MCF 10A (cell line): ENCODE measurements at regions of chr5 and their contacts with region 1.

Region 1: GRCh38 chr5:137778772-137779564 is 24.8 kb upstream of the HNRNPA0 start:
- DNase-seq: peak; percentile 82
- H3K4me3 Mint-ChIP-seq: no peak overlapping the region
- H3K27ac Mint-ChIP-seq: no peak overlapping the region
- H3K4me1 Mint-ChIP-seq: no peaks in the 10 kb centered on the region
- H3K27me3 Mint-ChIP-seq: peaks cover 24% of the 10 kb centered on the region
- CTCF ChIP-seq: peak; percentile 86

Region 2: GRCh38 chr5:137754126-137754960 is 24.6 kb before region 1 on chr5 and contains the start of gene HNRNPA0:
- CTCF ChIA-PET with region 1: interaction called, 35 read pairs
- POLR2A ChIA-PET with region 1: interaction called, 8 read pairs
- intact Hi-C with region 1: no loop called
- DNase-seq: peak; percentile 98
- H3K4me3 Mint-ChIP-seq: peak within 1 kb of the TSS; percentile 87
- H3K27ac Mint-ChIP-seq: peak within 1 kb of the TSS; percentile 99
- H3K4me1 Mint-ChIP-seq: peaks cover 28% of the 10 kb centered on the region
- H3K27me3 Mint-ChIP-seq: no peaks in the 10 kb centered on the region
- CTCF ChIP-seq: no peak
- total RNA-seq, gene HNRNPA0: 30.8 and 31.8 TPM in 2 replicates

Region 3: DNA sequence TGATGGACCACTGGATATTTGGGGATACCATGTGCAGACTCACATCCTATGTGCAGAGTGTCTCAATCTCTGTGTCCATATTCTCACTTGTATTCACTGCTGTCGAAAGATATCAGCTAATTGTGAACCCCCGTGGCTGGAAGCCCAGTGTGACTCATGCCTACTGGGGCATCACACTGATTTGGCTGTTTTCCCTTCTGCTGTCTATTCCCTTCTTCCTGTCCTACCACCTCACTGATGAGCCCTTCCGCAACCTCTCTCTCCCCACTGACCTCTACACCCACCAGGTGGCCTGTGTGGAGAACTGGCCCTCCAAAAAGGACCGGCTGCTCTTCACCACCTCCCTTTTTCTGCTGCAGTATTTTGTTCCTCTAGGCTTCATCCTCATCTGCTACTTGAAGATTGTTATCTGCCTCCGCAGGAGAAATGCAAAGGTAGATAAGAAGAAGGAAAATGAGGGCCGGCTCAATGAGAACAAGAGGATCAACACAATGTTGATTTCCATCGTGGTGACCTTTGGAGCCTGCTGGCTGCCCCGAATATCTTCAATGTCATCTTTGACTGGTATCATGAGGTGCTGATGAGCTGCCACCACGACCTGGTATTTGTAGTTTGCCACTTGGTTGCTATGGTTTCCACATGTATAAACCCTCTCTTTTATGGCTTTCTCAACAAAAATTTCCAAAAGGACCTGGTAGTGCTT is 29.7 kb after region 1 on chr5:
- CTCF ChIA-PET with region 1: interaction called, 15 read pairs
- POLR2A ChIA-PET with region 1: no interaction called
- intact Hi-C with region 1: no loop called
- DNase-seq: peak; percentile 65
- H3K4me3 Mint-ChIP-seq: no peak overlapping the region
- H3K27ac Mint-ChIP-seq: no peak overlapping the region
- H3K4me1 Mint-ChIP-seq: no peaks in the 10 kb centered on the region
- H3K27me3 Mint-ChIP-seq: peaks cover 17% of the 10 kb centered on the region
- CTCF ChIP-seq: no peak

Region 4: GRCh38 chr5:137954131-137954879 is 175.3 kb after region 1 on chr5:
- CTCF ChIA-PET with region 1: interaction called, 36 read pairs
- POLR2A ChIA-PET with region 1: interaction called, 3 read pairs
- intact Hi-C with region 1: no loop called
- DNase-seq: peak; percentile 85
- H3K4me3 Mint-ChIP-seq: peak overlapping the region; percentile 25
- H3K27ac Mint-ChIP-seq: peak overlapping the region; percentile 70
- H3K4me1 Mint-ChIP-seq: peaks cover 10% of the 10 kb centered on the region
- H3K27me3 Mint-ChIP-seq: no peaks in the 10 kb centered on the region
- CTCF ChIP-seq: no peak

Region 5: DNA sequence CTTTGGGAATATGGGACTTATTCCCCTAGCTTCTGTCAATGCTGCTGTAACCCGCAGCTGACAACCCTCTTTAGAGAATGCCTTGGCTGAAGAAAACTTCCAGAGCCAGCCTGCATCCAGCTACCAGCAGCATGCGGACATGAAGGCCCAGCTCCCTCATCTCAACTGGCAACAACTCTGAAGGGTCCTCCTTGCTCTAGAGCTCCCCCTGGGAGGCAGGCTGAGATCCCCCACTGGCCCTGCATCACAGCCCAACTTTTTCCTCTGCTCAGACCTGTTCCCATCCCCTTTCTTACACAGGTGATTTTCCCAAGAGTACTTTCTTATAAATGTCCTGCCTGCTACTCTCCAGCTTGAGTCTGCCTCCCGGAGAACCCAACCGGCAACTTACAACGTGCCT is 286.1 kb after region 1 on chr5:
- CTCF ChIA-PET with region 1: interaction called, 29 read pairs
- POLR2A ChIA-PET with region 1: interaction called, 4 read pairs
- intact Hi-C with region 1: loop called (anchors 1 kb)
- DNase-seq: no peak
- H3K4me3 Mint-ChIP-seq: no peak overlapping the region
- H3K27ac Mint-ChIP-seq: no peak overlapping the region
- H3K4me1 Mint-ChIP-seq: peaks cover 7% of the 10 kb centered on the region
- H3K27me3 Mint-ChIP-seq: no peaks in the 10 kb centered on the region
- CTCF ChIP-seq: peak; percentile 18

Region 6: DNA sequence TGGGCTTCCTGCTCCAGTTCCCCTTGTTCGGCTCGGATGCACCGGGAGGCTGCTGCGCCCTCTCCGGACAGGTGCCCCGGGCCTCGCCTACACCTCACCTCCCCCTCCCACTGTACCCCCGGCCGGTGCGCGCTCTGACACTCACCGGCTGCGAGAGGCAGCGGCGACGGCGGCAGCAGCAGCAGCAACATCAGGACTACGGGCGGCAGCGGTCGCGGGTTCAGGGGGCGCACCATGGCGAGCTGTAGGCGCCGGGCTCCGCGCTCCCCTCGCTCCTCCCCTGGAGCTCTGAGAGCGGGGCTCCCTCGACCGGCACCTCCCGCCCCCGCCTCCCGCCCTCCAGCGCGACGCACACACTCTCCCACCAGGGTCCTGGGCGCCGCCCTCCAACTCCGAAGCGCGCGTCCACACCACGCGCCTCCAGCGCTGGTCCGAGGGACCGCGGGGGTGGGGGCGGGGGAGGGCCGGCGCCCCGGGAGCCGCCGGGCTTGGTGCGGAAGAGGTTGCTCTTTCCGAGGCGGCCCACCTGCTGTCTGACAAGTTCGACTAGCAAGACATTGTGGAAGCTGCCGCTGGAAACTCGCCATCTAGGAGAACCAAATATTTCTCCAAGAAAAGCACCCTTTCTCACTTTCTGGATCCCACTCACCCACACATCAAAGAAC is 495.4 kb after region 1 on chr5 and contains the start of gene GFRA3:
- CTCF ChIA-PET with region 1: no interaction called
- POLR2A ChIA-PET with region 1: no interaction called
- intact Hi-C with region 1: no loop called
- DNase-seq: no peak
- H3K4me3 Mint-ChIP-seq: no peak within 1 kb of the TSS
- H3K27ac Mint-ChIP-seq: no peak within 1 kb of the TSS
- H3K4me1 Mint-ChIP-seq: no peaks in the 10 kb centered on the region
- H3K27me3 Mint-ChIP-seq: no peaks in the 10 kb centered on the region
- CTCF ChIP-seq: no peak
- total RNA-seq, gene GFRA3: not detected in 2 replicates